Tibial artery (tissue), 4 donors: ENCODE measurements at regions of chr12 and their contacts with region 1.

Region 1: DNA sequence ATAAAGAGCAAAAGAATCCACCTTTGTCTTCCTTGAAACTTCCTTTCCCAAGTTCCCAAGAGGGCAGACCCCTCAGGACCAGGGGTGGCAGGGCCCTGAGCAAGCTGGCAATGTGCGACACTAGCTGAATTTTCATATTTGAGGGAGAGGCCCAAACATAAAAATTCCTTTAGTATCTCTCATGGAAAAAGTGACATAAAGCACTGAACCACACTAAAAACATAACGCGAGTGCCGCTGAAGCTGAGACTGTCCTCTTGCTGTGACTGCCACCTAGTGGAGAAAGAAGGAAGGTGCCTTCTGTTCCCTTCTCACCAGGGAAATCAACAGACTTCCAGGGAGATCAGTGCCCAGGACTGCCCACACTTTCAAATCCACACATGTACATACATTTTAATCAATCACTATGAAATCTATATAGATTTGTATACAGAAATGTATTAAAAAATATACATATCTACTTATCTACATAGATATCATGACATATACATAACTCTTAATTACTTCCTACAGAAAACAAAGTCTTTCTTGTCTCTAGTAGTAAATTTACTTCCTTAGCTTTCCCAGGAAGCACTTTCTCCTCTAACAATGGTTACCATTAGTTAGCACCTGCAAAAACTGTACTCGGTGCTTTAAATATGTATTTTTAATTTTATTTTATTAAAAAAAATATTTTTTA is 53.8 kb downstream of the SSH1 start:
- DNase-seq: peak; percentile 90 to 91
- H3K4me3 ChIP-seq: no peak overlapping the region
- H3K27ac ChIP-seq: peak overlapping the region; percentile 80
- H3K4me1 ChIP-seq: peaks cover 0 to 76% (median 34%) of the 10 kb centered on the region in 4 donors
- H3K27me3 ChIP-seq: no peaks in the 10 kb centered on the region
- CTCF ChIP-seq: peak; percentile 95 to 97

Region 2: GRCh38 chr12:108653082-108653516 is 150.5 kb before region 1 on chr12:
- intact Hi-C with region 1: no loop called
- DNase-seq: no peak
- H3K4me3 ChIP-seq: no peak overlapping the region
- H3K27ac ChIP-seq: no peak overlapping the region
- H3K4me1 ChIP-seq: peaks cover 0 to 43% (median 9%) of the 10 kb centered on the region in 4 donors
- H3K27me3 ChIP-seq: no peaks in the 10 kb centered on the region
- CTCF ChIP-seq: no peak

Region 3: GRCh38 chr12:108664338-108665258 is 139.0 kb before region 1 on chr12:
- intact Hi-C with region 1: loop called (anchors 2 kb)
- DNase-seq: peak; percentile 93 to 94
- H3K4me3 ChIP-seq: peak overlapping the region in 1 of 2 donors; percentile 20
- H3K27ac ChIP-seq: peak overlapping the region; percentile 73 to 77
- H3K4me1 ChIP-seq: peaks cover 6 to 79% (median 55%) of the 10 kb centered on the region in 4 donors
- H3K27me3 ChIP-seq: no peaks in the 10 kb centered on the region
- CTCF ChIP-seq: peak; percentile 94 to 97

Region 4: GRCh38 chr12:108850854-108851573 is 47.4 kb after region 1 on chr12:
- intact Hi-C with region 1: loop called (anchors 5 kb)
- DNase-seq: peak; percentile 57 to 79
- H3K4me3 ChIP-seq: no peak overlapping the region
- H3K27ac ChIP-seq: peak overlapping the region; percentile 65 to 98
- H3K4me1 ChIP-seq: peaks cover 0 to 82% (median 45%) of the 10 kb centered on the region in 4 donors
- H3K27me3 ChIP-seq: no peaks in the 10 kb centered on the region
- CTCF ChIP-seq: no peak